ENCODE measurements at regions of chr15 and their contacts with region 1.

Region 1: GRCh38 chr15:45253330-45253729 is 1.3 kb downstream of the SLC28A2 start:
- DNase-seq: no peak
- H3K4me3 ChIP-seq: no peak overlapping the region
- H3K27ac ChIP-seq: no peak overlapping the region
- H3K4me1 ChIP-seq: no peaks in the 10 kb centered on the region
- H3K27me3 ChIP-seq: no peaks in the 10 kb centered on the region
- CTCF ChIP-seq: peak; percentile 23

Region 2: GRCh38 chr15:45162771-45163526 is 90.4 kb before region 1 on chr15:
- intact Hi-C with region 1: loop called (anchors 10 kb)
- DNase-seq: peak; percentile 73
- H3K4me3 ChIP-seq: no peak overlapping the region
- H3K27ac ChIP-seq: no peak overlapping the region
- H3K4me1 ChIP-seq: peaks cover 33% of the 10 kb centered on the region
- H3K27me3 ChIP-seq: no peaks in the 10 kb centered on the region
- CTCF ChIP-seq: peak; percentile 92

Region 3: DNA sequence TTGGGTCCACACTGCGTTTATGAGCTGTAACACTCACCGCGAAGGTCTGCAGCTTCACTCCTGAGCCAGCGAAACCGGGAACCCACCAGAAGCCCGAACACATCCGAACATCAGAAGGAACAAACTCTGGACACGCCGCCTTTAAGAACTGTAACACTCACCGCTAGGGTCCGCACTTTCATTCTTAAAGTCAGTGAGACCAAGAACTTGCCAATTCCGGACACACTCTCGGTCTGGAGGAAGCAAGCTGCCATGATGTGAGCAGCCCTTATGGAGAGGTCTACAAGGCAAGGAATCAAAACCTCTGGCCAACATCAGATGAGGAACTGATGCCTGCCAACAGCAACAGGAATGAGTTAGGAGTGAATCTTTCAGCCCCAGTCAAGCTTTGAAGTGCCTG is 61.6 kb after region 1 on chr15:
- intact Hi-C with region 1: loop called (anchors 10 kb)
- DNase-seq: no peak
- H3K4me3 ChIP-seq: no peak overlapping the region
- H3K27ac ChIP-seq: no peak overlapping the region
- H3K4me1 ChIP-seq: no peaks in the 10 kb centered on the region
- H3K27me3 ChIP-seq: no peaks in the 10 kb centered on the region
- CTCF ChIP-seq: peak; percentile 45

Region 4: GRCh38 chr15:45361878-45362277 is 108.5 kb after region 1 on chr15:
- intact Hi-C with region 1: no loop called
- DNase-seq: no peak
- H3K4me3 ChIP-seq: no peak overlapping the region
- H3K27ac ChIP-seq: no peak overlapping the region
- H3K4me1 ChIP-seq: peaks cover 15% of the 10 kb centered on the region
- H3K27me3 ChIP-seq: no peaks in the 10 kb centered on the region
- CTCF ChIP-seq: no peak

Measured in left ventricle myocardium inferior (tissue), 1 donor.